Activated CD4-positive, alpha-beta memory T cell treated with anti-CD3 and anti-CD28 coated beads for 36 hours (primary cell): ENCODE measurements at regions of chr18 and their contacts with region 1.

Region 1: DNA sequence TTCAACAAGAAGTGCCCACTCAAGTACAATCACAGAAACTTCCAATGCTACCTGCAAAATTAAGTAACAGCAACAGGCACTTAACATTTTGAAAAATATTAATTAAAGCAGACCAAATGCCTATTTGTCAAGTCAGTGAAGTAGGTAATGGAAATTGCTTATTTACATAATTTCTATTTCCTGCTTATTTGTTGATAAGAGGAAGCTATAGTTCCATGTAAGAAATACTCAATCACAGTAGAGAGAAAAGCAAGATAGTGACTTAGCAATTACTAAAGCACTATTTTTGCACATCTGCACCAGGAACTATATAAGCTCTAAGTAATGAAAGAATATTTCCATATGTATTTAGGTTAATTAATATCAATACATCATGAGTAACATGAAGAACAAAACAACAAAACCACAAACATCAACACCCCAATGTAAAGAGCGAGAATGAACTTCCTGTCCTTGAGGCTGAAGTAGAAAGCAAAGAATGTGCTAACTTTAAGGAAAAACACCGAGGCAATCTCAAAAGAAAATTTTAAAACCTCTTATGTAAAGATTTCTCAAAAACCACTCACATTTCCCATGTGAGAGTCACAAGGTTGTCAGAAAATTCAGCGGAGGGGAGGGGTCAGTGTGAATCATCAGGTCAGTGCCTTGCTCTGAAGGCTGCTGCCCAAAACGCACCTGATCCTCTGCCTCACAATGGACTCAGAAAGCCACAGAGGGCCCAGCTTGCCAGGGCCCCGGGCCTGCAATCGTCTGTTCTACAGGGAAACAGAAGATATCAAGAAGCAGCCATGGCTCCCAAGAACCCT is 12.5 kb downstream of the NPC1 start:
- DNase-seq: peak; percentile 73
- H3K4me3 Mint-ChIP-seq: peak overlapping the region; percentile 43
- H3K27ac Mint-ChIP-seq: peak overlapping the region; percentile 88
- H3K4me1 Mint-ChIP-seq: peaks cover 50% of the 10 kb centered on the region
- H3K27me3 Mint-ChIP-seq: no peaks in the 10 kb centered on the region

Region 2: GRCh38 chr18:23401400-23402347 is 172.2 kb before region 1 on chr18:
- CTCF ChIA-PET with region 1: no interaction called
- POLR2A ChIA-PET with region 1: no interaction called
- intact Hi-C with region 1: no loop called
- DNase-seq: no peak
- H3K4me3 Mint-ChIP-seq: no peak overlapping the region
- H3K27ac Mint-ChIP-seq: no peak overlapping the region
- H3K4me1 Mint-ChIP-seq: peaks cover 6% of the 10 kb centered on the region
- H3K27me3 Mint-ChIP-seq: no peaks in the 10 kb centered on the region

Region 3: GRCh38 chr18:23586249-23587196 is 12.7 kb after region 1 on chr18 and contains the start of gene NPC1:
- CTCF ChIA-PET with region 1: interaction called, 4 read pairs
- POLR2A ChIA-PET with region 1: interaction called, 3 read pairs
- intact Hi-C with region 1: loop called (anchors 1 kb)
- DNase-seq: peak; percentile 94
- H3K4me3 Mint-ChIP-seq: peak within 1 kb of the TSS; percentile 95
- H3K27ac Mint-ChIP-seq: peak within 1 kb of the TSS; percentile 93
- H3K4me1 Mint-ChIP-seq: peaks cover 30% of the 10 kb centered on the region
- H3K27me3 Mint-ChIP-seq: peaks cover 3% of the 10 kb centered on the region
- total RNA-seq, gene NPC1: 39.3 to 39.9 TPM

Region 4: DNA sequence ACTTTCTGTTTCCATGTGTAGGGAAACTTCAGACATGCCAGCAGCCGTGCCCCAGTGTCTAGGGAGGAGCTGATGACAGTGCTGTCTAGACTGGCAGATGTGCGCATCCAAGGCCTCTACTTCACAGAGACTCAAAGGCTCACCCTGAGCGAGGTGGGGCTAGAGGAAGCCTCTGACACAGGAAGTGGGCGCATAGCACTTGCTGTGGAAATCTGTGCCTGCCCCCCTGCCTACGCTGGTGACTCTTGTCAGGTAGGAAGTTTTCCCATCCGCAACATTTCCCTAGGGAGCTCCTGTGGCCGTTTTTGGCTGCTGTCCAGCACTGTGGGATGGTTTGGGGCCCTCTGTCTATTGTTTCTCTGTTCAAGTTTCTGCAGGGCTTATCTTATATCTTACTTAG is 297.6 kb after region 1 on chr18:
- CTCF ChIA-PET with region 1: no interaction called
- POLR2A ChIA-PET with region 1: no interaction called
- intact Hi-C with region 1: no loop called
- DNase-seq: peak; percentile 62
- H3K4me3 Mint-ChIP-seq: no peak overlapping the region
- H3K27ac Mint-ChIP-seq: peak overlapping the region; percentile 16
- H3K4me1 Mint-ChIP-seq: peaks cover 30% of the 10 kb centered on the region
- H3K27me3 Mint-ChIP-seq: no peaks in the 10 kb centered on the region